OCI-LY7 (cell line): ENCODE measurements at regions of chr9 and their contacts with region 1.

Region 1: DNA sequence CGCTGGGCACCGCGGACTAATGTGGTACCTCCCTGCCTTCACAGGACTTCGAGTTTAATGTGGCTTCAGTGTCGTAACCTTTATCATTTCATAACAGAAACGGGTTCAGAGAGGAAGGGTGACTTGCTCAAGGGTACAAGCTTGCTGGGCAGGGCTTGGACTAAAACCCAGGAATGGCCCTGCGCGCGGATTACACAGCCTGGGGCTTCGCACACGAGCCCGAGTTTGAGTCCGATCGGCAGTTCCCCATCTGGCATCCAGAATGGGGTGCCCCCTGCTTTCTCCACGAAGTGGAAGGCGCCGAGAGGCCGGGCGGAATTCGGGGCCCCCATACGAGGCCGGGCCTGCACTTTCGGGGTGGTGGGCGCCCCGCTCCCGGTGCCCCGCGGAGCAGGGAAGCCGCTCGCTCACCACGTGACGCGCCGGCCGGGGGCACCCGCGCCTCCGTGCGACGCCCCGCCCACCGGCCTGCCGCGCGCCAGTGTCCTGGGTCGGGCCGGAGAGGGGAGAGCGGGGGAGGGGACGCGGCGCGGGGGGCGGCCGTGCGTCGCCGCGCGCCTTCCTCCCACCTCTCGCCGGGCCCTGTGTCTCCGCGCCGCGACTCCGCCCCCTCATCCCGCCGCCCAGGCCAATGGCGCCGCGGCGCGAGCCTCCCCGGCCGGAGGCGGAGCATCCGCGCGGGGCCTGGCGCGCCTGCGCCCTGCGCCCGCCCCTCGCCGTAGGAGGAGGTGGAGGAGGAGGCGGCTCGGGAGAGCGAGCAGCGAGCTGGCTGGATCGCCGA is at the start of gene SET:
- DNase-seq: peak; percentile 96
- H3K4me3 ChIP-seq: peak within 1 kb of the TSS; percentile 92
- H3K27ac ChIP-seq: peak within 1 kb of the TSS; percentile 91
- H3K4me1 ChIP-seq: peaks cover 40% of the 10 kb centered on the region
- CTCF ChIP-seq: no peak
- total RNA-seq, gene SET: 598 and 1,041 TPM in 2 replicates

Region 2: DNA sequence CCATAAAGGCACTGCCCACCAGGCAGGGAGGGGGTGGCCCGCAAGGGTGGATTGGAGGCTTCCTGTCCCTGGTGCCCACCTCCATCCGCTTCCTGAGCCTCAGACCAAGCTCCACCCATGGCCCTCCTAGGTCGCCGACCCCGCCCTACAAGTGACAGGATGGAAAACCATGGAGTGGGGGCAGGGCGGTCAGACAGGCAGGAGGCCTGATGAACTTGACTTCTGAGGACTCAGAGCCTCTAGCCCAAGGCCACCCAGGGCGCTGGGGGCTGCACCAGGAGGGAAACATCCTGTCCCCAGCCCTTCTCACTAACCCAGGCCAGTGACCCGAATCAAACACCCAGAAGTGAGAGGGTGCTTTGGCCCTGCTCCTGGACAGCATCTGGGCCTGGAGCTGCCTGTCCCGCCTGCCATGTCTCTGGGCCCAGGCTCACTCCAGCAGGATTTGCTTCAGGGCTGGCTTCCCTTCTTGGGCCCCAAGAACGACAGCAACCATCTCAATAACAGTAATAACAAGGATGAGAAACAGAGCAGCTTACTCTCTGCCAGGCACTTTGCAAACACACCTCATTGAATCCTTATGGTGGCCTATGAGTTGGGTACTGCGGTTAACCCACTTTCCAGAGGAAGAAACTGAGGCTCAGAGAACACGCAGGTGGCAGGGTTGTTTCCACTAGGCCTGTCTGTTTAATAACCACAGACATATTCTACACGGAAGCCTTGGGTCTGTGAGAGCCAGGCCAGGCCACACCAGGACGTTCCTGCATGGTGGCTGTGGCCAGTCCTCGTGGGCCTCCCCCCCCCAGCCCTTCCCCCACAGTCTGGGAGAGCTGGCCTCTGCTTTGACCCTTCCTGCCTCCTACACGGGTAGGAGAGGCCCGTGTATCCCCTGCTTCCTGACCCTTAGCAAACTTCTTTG is 784.9 kb before region 1 on chr9:
- CTCF ChIA-PET with region 1: no interaction called
- POLR2A ChIA-PET with region 1: no interaction called
- intact Hi-C with region 1: loop called (anchors 10 kb)
- DNase-seq: peak; percentile 91
- H3K4me3 ChIP-seq: peak overlapping the region; percentile 58
- H3K27ac ChIP-seq: peak overlapping the region; percentile 94
- H3K4me1 ChIP-seq: peaks cover 79% of the 10 kb centered on the region
- CTCF ChIP-seq: no peak

Region 3: DNA sequence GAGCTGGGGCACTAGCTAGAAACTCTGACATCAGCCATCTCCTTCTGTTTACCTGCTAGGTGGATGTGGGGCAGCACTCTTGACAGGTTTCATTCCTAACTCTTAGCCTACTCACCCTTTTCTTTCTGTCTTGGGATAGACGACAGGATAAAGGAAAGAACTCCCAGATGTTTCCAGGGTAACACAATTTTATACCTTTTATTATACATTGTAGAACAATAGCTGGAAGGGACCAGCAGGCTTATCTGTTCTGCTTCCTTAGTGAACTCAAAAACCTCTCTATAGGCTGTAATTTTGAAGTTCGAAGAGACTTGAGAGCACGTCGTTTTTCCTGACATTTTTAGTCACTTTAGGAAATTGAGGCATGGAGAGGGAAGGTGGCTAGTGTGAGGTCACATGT is 123.1 kb before region 1 on chr9:
- CTCF ChIA-PET with region 1: no interaction called
- POLR2A ChIA-PET with region 1: no interaction called
- intact Hi-C with region 1: no loop called
- DNase-seq: no peak
- H3K4me3 ChIP-seq: no peak overlapping the region
- H3K27ac ChIP-seq: no peak overlapping the region
- H3K4me1 ChIP-seq: no peaks in the 10 kb centered on the region
- CTCF ChIP-seq: no peak

Region 4: GRCh38 chr9:128643519-128644300 is 45.0 kb before region 1 on chr9:
- CTCF ChIA-PET with region 1: no interaction called
- POLR2A ChIA-PET with region 1: interaction called, 4 read pairs
- intact Hi-C with region 1: loop called (anchors 5 kb)
- DNase-seq: peak; percentile 89
- H3K4me3 ChIP-seq: peak overlapping the region; percentile 42
- H3K27ac ChIP-seq: peak overlapping the region; percentile 87
- H3K4me1 ChIP-seq: peaks cover 27% of the 10 kb centered on the region
- CTCF ChIP-seq: no peak

Region 5: GRCh38 chr9:128656416-128657343 is 32.0 kb before region 1 on chr9 and contains the start of gene DYNC2I2:
- CTCF ChIA-PET with region 1: no interaction called
- POLR2A ChIA-PET with region 1: interaction called, 5 read pairs
- intact Hi-C with region 1: loop called (anchors 1 kb)
- DNase-seq: peak; percentile 89
- H3K4me3 ChIP-seq: peak within 1 kb of the TSS; percentile 81
- H3K27ac ChIP-seq: peak within 1 kb of the TSS; percentile 83
- H3K4me1 ChIP-seq: peaks cover 12% of the 10 kb centered on the region
- CTCF ChIP-seq: no peak
- total RNA-seq, gene DYNC2I2: 71.8 and 97.6 TPM in 2 replicates

Region 6: DNA sequence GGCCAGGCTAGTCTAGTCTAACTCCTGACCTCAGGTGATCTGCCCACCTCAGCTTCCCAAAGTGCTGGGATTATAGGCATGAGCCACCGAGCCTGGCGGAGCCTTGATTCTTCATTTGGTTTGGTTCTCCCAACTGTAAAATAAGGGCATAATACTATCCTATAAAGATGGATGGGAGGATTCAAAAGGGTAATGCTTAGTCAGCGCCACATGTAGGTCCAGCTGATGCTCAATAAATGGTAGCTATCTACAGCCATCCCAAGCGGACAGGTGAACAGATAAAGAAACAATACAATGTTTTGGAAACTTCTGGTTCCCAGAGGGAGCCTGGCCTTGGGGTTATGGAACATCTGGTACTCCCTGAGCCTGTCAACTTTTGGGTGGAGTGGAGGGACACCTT is 13.3 kb before region 1 on chr9:
- CTCF ChIA-PET with region 1: no interaction called
- POLR2A ChIA-PET with region 1: no interaction called
- intact Hi-C with region 1: no loop called
- DNase-seq: no peak
- H3K4me3 ChIP-seq: no peak overlapping the region
- H3K27ac ChIP-seq: no peak overlapping the region
- H3K4me1 ChIP-seq: peaks cover 19% of the 10 kb centered on the region
- CTCF ChIP-seq: no peak

Region 7: DNA sequence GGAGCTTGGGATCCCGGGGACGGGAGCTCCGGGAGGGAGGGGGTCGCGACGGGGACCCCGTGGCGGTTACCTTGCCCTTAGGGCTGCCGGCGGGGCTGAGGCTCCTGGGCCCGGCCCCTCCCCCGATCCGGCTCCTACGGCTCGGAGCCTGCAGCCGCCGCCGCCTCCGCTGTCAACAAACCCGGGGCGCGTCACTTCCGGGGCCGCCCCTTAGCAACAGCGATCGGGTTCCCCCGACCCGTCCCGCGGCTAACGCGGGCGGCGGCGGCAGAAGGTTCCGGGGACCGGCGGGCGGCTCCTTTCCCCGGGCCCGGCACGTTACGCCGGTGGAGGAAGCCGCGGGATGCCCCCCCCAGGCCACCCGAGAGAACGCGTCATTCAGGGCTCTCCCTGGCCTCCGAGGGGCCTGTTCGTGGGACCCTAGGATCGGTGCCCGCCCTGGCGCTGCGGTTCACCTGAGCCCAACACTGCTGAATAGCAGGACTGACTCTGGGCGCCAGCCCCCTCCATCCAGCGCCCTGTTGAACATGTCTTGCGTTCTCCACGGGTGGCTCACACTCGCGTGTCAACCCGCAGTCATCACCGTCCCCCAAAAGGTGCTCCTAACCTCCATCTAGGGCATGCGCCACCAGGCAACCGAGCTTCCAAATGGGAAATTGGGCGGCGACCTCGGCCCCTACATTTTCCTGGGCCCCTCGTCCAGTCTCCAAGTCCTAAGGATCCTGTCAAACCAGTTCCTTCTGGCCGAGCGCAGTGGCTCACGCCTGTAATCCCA is 83.2 kb after region 1 on chr9 and contains the start of gene ZER1:
- CTCF ChIA-PET with region 1: no interaction called
- POLR2A ChIA-PET with region 1: no interaction called
- intact Hi-C with region 1: loop called (anchors 5 kb)
- DNase-seq: peak; percentile 94
- H3K4me3 ChIP-seq: peak within 1 kb of the TSS; percentile 86
- H3K27ac ChIP-seq: peak within 1 kb of the TSS; percentile 64
- H3K4me1 ChIP-seq: peaks cover 16% of the 10 kb centered on the region
- CTCF ChIP-seq: no peak
- total RNA-seq, gene ZER1: 6.9 and 11.0 TPM in 2 replicates

Region 8: DNA sequence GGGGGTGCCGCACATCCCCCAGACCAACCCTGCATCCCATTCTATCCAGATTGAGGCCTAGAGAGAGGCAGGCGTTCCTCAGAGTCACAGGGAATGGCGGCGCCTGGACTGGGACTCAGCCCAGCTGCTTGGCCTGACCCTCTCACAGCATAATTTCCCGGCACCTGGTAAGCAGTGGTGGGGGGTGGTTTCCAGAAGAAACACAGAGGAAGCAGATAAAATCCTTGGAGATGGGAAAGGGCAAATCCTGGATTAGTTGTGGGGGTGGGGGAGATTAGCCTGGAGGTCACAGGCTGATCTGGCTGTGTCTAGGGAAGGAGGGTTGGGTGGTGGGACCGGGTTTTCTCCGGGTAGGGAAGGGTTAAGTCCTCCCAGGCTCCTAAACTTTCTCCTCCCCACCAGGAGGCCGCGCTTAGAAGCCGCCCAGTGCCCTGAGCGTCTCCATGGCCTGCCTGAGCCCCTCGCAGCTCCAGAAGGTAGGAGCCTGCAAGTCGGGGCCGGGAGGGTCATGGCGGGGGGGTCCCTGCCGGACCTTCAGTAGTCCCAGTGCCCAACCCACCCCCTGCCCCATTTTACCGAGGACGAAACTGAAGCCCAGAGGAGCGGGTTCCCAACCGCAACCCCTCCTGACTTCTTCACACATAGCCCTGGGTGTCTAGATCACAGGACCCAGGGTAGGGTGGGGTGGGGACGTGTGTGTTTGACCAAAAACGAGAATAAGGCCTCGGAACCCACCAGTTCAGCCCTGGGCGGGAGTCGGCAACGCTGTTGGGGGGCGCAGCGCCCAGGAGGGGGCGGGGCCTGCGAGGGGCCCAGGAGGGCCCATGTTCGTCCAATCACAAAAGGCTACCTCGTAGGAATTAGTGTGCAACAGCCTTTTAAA is 233.4 kb after region 1 on chr9:
- CTCF ChIA-PET with region 1: no interaction called
- POLR2A ChIA-PET with region 1: no interaction called
- intact Hi-C with region 1: loop called (anchors 5 kb)
- DNase-seq: peak; percentile 86
- H3K4me3 ChIP-seq: peak overlapping the region; percentile 79
- H3K27ac ChIP-seq: peak overlapping the region; percentile 98
- H3K4me1 ChIP-seq: peaks cover 37% of the 10 kb centered on the region
- CTCF ChIP-seq: no peak